B cell (primary cell): ENCODE measurements at regions of chr12 and their contacts with region 1.

Region 1: GRCh38 chr12:108664338-108665258 is 30.9 kb upstream of the SELPLG start:
- DNase-seq: peak; percentile 86
- ATAC-seq: peak; percentile 95
- H3K4me3 ChIP-seq: peak overlapping the region in 4 of 5 experiments; percentile 16 to 57 (median 30)
- H3K4me3 Mint-ChIP-seq: peak overlapping the region; percentile 66
- H3K27ac ChIP-seq: peak overlapping the region; percentile 62 to 77
- H3K27ac Mint-ChIP-seq: peak overlapping the region; percentile 73
- H3K4me1 ChIP-seq: peaks cover 52 to 53% of the 10 kb centered on the region in 2 donors
- H3K4me1 Mint-ChIP-seq: peaks cover 56% of the 10 kb centered on the region
- H3K27me3 ChIP-seq: no peaks in the 10 kb centered on the region
- H3K27me3 Mint-ChIP-seq: no peaks in the 10 kb centered on the region
- CTCF ChIP-seq: peak; percentile 90

Region 2: GRCh38 chr12:108394196-108394595 is 270.4 kb before region 1 on chr12:
- CTCF ChIA-PET with region 1: no interaction called
- POLR2A ChIA-PET with region 1: no interaction called
- intact Hi-C with region 1: no loop called
- DNase-seq: no peak
- ATAC-seq: no peak
- H3K4me3 ChIP-seq: no peak overlapping the region
- H3K4me3 Mint-ChIP-seq: no peak overlapping the region
- H3K27ac ChIP-seq: no peak overlapping the region
- H3K27ac Mint-ChIP-seq: no peak overlapping the region
- H3K4me1 ChIP-seq: no peaks in the 10 kb centered on the region
- H3K4me1 Mint-ChIP-seq: no peaks in the 10 kb centered on the region
- H3K27me3 ChIP-seq: peaks cover 0 to 10% (median 2%) of the 10 kb centered on the region in 4 experiments
- H3K27me3 Mint-ChIP-seq: peaks cover 17% of the 10 kb centered on the region
- CTCF ChIP-seq: no peak

Region 3: GRCh38 chr12:108570743-108571608 is 93.6 kb before region 1 on chr12:
- CTCF ChIA-PET with region 1: interaction called, 172 read pairs
- POLR2A ChIA-PET with region 1: no interaction called
- intact Hi-C with region 1: no loop called
- DNase-seq: peak; percentile 48
- ATAC-seq: no peak
- H3K4me3 ChIP-seq: no peak overlapping the region
- H3K4me3 Mint-ChIP-seq: no peak overlapping the region
- H3K27ac ChIP-seq: peak overlapping the region in 1 of 2 donors; percentile 64
- H3K27ac Mint-ChIP-seq: peak overlapping the region; percentile 80
- H3K4me1 ChIP-seq: peaks cover 56 to 76% of the 10 kb centered on the region in 2 donors
- H3K4me1 Mint-ChIP-seq: peaks cover 82% of the 10 kb centered on the region
- H3K27me3 ChIP-seq: no peaks in the 10 kb centered on the region
- H3K27me3 Mint-ChIP-seq: no peaks in the 10 kb centered on the region
- CTCF ChIP-seq: peak; percentile 41

Region 4: DNA sequence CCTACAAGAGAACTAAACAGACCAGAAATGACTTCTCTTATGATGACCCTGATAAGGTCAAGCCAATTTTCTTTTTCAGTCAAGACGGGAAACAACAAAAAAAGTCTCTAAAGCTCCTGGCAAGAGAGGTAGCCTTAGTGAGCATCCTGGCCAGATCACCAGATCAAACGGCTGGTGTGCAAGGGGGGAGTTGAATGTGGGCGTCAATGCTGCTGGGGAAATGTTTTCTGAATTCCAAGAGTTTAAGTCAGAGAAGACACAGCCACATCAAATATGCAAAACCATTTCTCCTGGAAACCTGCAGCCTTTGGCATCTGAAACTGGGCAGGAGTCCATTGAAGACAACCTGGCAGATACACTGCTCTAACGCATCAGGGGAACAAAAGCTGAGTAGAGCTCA is 14.9 kb before region 1 on chr12:
- CTCF ChIA-PET with region 1: interaction called, 18 read pairs
- POLR2A ChIA-PET with region 1: interaction called, 11 read pairs
- intact Hi-C with region 1: no loop called
- DNase-seq: no peak
- ATAC-seq: no peak
- H3K4me3 ChIP-seq: no peak overlapping the region
- H3K4me3 Mint-ChIP-seq: no peak overlapping the region
- H3K27ac ChIP-seq: peak overlapping the region in 1 of 2 donors; percentile 4
- H3K27ac Mint-ChIP-seq: peak overlapping the region; percentile 3
- H3K4me1 ChIP-seq: peaks cover 26% of the 10 kb centered on the region in 2 donors
- H3K4me1 Mint-ChIP-seq: peaks cover 55% of the 10 kb centered on the region
- H3K27me3 ChIP-seq: no peaks in the 10 kb centered on the region
- H3K27me3 Mint-ChIP-seq: no peaks in the 10 kb centered on the region
- CTCF ChIP-seq: no peak

Region 5: GRCh38 chr12:108714886-108715285 is 50.3 kb after region 1 on chr12:
- CTCF ChIA-PET with region 1: interaction called, 4 read pairs
- POLR2A ChIA-PET with region 1: no interaction called
- intact Hi-C with region 1: loop called (anchors 2 kb)
- DNase-seq: no peak
- ATAC-seq: no peak
- H3K4me3 ChIP-seq: peak overlapping the region in 1 of 5 experiments; percentile 30
- H3K4me3 Mint-ChIP-seq: no peak overlapping the region
- H3K27ac ChIP-seq: no peak overlapping the region
- H3K27ac Mint-ChIP-seq: peak overlapping the region; percentile 11
- H3K4me1 ChIP-seq: peaks cover 39% of the 10 kb centered on the region in 2 donors
- H3K4me1 Mint-ChIP-seq: peaks cover 54% of the 10 kb centered on the region
- H3K27me3 ChIP-seq: no peaks in the 10 kb centered on the region
- H3K27me3 Mint-ChIP-seq: no peaks in the 10 kb centered on the region
- CTCF ChIP-seq: no peak

Region 6: DNA sequence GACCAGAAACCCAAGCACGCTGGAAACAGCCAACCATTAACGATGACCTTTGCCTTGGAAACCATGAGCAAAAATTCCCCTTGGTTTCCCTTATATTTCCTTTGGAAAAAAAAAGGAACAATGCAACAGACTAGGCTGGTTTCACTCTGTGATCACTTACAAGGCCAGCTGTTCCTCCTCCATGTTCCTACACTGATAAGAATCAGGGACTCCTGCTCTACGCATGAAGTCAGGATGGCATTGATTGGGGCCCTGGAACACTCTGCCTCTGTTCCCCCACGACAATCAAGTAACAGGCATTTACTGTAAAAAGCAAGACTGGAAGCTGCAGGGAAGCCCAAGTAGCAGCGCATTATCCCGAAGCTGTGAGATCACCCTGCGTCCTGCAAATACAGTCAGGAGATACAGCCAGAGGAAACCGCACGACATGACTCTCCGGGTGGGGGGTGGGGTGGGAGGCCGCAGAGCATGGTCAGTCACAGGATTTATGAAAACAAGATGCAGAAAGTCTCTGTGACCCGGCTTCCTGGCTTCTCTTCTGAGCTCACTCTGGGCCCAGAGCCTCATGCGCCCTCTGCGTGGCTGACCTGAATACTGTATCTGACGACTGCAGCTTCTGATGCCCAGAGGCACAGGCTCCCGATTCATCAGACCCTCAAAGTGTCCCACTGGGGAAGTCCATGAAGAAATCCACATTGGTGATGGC is 161.7 kb after region 1 on chr12:
- CTCF ChIA-PET with region 1: interaction called, 10 read pairs
- POLR2A ChIA-PET with region 1: no interaction called
- intact Hi-C with region 1: no loop called
- DNase-seq: no peak
- ATAC-seq: peak; percentile 10
- H3K4me3 ChIP-seq: no peak overlapping the region
- H3K4me3 Mint-ChIP-seq: peak overlapping the region; percentile 80
- H3K27ac ChIP-seq: no peak overlapping the region
- H3K27ac Mint-ChIP-seq: peak overlapping the region; percentile 70
- H3K4me1 ChIP-seq: peaks cover 14 to 33% of the 10 kb centered on the region in 2 donors
- H3K4me1 Mint-ChIP-seq: peaks cover 52% of the 10 kb centered on the region
- H3K27me3 ChIP-seq: no peaks in the 10 kb centered on the region
- H3K27me3 Mint-ChIP-seq: no peaks in the 10 kb centered on the region
- CTCF ChIP-seq: no peak